ENCODE measurements at regions of chr13 and their contacts with region 1.

Region 1: DNA sequence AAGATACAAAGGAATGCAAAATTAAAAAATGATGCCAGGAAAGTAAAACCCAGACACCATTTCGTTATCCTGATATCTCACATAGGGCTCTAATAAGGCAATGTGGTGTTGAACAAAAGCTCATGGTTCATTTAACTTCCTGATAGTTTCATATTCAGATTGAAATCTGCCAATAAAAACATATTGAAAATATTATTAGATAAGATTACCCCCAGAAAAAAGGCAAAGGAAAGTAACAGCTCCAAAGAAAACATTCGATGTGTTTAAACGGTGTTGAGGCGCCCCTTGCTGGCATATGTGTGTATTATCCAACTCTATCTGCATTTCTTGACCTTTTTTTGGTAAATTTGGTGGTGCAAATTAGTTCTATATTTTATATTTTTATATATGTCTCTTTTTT is 75.9 kb downstream of the ESD start:
- DNase-seq: peak; percentile 61
- ATAC-seq: no peak
- H3K4me3 Mint-ChIP-seq: no peak overlapping the region
- H3K27ac Mint-ChIP-seq: no peak overlapping the region
- H3K4me1 Mint-ChIP-seq: peaks cover 17% of the 10 kb centered on the region
- H3K27me3 Mint-ChIP-seq: no peaks in the 10 kb centered on the region

Region 2: DNA sequence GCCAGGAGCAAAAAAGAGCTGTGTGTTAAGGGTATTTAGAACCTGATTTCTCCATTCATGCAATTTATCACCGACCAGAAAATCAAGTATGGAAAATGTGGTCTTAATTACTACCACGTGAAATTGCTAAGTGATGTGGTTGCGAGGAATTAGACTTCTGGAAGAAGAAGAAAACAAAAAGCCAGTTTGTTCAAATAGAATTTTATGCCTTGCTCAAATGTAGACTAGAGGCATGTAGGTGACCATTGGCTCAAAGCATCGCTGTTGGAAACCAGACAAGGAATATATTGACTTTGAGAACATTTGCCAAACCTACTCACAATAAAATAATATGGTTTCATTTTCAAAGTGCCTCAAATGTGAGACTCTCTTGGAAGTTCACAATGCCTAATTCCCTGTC is 225.4 kb before region 1 on chr13:
- CTCF ChIA-PET with region 1: interaction called, 14 read pairs
- POLR2A ChIA-PET with region 1: no interaction called
- DNase-seq: no peak
- ATAC-seq: no peak
- H3K4me3 Mint-ChIP-seq: no peak overlapping the region
- H3K27ac Mint-ChIP-seq: no peak overlapping the region
- H3K4me1 Mint-ChIP-seq: no peaks in the 10 kb centered on the region
- H3K27me3 Mint-ChIP-seq: no peaks in the 10 kb centered on the region